ENCODE measurements at regions of chr17 and their contacts with region 1.

Region 1: DNA sequence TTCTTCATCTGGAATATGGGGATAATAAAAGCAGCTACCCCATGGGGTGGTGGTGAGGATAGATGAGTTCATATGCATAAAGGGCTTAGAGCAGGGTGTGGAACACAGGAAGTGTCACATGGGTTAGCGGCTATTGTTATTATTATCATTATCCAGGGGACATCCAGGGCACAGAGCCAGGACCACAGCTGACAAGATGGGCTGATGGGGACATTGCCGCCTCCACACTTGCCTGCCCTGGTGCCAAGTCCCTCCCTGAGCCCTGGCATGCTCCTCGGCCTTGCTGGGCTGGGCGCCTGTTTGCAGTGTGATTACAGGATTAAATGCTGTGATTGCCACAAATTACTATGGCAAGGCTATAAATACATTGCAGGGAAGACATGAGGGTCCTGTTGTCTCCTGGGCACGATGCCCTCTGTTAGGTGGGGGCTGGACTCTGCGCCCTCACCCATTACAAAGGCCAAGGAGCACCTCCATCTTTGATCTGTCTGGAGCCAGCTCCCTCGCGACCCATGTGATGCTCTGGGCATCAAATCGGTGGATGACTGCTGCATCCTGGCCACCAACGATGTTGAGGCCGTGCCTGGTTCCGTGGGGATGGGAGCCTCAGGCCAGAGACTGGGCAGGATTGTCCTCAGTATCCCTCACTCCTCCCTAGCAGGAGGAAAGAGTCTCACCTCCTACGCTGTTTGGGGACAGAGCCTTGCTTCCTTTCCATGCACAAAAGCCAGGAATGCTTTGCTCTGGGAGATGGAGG is 43.2 kb downstream of the PIMREG start:
- DNase-seq: no peak
- H3K4me3 ChIP-seq: no peak overlapping the region
- H3K27ac ChIP-seq: no peak overlapping the region
- H3K4me1 ChIP-seq: no peaks in the 10 kb centered on the region
- H3K27me3 ChIP-seq: no peaks in the 10 kb centered on the region
- CTCF ChIP-seq: no peak

Region 2: GRCh38 chr17:6548578-6549330 is 61.3 kb after region 1 on chr17:
- intact Hi-C with region 1: loop called (anchors 10 kb)
- DNase-seq: no peak
- H3K4me3 ChIP-seq: no peak overlapping the region
- H3K27ac ChIP-seq: no peak overlapping the region
- H3K4me1 ChIP-seq: no peaks in the 10 kb centered on the region
- H3K27me3 ChIP-seq: no peaks in the 10 kb centered on the region
- CTCF ChIP-seq: no peak